Left lung (tissue), 14 donors: ENCODE measurements at regions of chr3 and their contacts with region 1.

Region 1: GRCh38 chr3:132645058-132645457 is 14.6 kb downstream of the ACAD11 start:
- DNase-seq: no peak
- ATAC-seq: no peak
- H3K4me3 ChIP-seq: no peak overlapping the region
- H3K27ac ChIP-seq: no peak overlapping the region
- H3K4me1 ChIP-seq: no peaks in the 10 kb centered on the region
- H3K27me3 ChIP-seq: no peaks in the 10 kb centered on the region
- CTCF ChIP-seq: no peak

Region 2: DNA sequence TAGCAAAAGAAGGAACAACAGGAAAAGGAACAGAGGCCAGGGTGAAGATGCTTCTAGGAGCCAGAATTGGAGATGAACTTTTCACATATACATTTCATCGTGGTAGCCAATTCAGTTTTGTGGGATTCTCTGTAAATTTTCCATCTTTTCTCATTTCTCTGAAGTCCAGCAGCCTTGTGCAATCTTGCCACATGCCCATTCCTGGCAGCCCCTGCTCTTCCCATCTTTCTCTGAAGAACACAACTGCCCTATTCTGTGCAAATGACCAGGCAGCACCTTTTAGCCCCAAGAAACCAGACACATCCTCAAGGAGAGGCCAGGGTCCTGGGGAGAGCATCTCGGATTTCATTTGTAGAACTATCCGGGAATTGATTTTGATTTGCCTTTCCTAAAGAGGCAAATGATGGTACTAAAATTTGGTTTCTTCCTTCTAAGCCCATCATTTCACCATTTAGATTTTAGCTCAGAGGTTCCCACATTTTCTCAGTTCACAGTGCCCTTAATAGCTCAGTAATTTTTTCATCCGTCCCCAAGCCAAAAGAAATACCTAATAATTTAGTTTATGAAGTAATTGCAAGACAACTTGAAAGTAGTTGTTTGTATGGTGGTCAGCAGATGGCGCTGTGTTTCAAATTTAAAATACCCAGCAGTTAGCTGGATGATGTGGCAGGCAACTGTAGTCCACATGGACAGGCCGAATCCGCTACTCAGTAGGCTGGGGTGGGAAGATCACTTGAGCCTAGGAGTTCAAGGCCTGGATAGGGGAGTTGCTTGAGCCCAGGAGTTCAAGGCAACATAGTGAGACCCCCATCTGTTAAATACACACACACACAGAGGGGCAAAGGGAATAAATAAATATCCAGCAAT is 109.2 kb before region 1 on chr3:
- intact Hi-C with region 1: loop called in 1 of 2 experiments (anchors 5 kb)
- DNase-seq: peak in 3 of 4 donors; percentile 20 to 62 (median 55)
- ATAC-seq: peak; percentile 91
- H3K4me3 ChIP-seq: no peak overlapping the region
- H3K27ac ChIP-seq: no peak overlapping the region
- H3K4me1 ChIP-seq: no peaks in the 10 kb centered on the region
- H3K27me3 ChIP-seq: no peaks in the 10 kb centered on the region
- CTCF ChIP-seq: peak; percentile 48 to 63